ENCODE measurements at regions of chr18 and their contacts with region 1.

Region 1: DNA sequence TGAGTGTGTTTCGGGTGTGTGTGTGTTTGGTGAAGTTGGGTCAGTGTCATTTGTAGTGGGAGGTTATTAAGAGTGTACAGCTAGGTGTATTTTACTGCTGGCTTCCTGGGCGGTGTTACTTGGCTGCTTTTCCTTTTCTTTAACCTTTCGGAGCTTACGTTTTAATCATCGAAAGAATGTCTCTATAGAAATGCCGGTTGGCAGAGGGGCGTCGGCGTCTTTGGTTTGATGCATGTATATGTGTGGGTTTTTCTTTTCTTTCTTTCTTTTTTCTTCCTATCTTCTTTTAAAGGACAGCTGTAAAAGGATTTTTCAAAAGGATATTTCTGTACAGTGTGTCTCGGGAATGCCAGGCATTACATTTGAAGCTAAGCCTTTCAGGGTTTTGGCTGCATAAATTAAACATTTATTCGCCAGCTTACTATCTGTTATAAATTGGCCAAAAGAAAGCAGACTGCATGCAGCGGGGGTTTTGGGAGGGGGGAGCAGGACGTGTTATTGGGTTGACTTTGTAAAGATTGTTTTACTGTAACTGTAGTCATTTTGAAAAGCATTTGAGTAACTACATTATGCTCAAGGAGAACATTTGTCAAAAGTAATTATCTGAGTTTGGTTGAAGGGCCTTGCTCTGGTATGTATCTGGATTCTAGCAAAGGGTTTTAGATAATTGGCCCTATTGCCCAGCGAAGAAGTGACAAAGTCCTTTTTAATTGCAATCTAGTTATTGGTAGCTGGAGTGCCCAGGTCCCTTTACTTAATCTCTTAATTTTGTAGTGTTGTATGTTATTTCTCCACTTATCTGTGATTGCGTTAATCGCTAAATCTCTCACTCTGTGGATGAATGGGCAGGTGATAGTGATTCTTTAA is 1.6 kb downstream of the ASXL3 start:
- DNase-seq: peak in 5 of 10 donors; percentile 9 to 55 (median 16)

Region 2: DNA sequence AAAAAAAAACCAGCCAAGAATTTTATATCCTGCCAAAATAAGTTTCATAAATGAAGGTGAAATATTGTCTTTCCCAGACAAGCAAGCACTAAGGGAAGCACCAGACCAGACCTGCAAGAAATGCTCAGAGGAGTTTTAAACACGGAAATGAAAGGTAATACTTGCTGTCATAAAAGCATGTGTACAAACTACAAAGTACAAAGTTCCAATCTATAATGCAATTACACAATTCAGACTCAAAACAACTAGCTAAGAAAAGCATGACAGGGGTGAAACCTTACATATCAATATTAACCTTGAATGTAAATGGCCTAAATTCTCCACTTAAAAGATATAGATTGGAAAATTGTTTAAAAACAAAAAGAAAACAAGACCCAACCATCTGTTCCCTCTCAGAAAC is 46.6 kb before region 1 on chr18:
- intact Hi-C with region 1: no loop called
- DNase-seq: no peak

Region 3: GRCh38 chr18:33749834-33750233 is 170.3 kb after region 1 on chr18:
- intact Hi-C with region 1: loop called (anchors 5 kb)
- DNase-seq: peak in 1 of 10 donors; percentile 74